Caco-2 (cell line): ENCODE measurements at regions of chr15 and their contacts with region 1.

Region 1: DNA sequence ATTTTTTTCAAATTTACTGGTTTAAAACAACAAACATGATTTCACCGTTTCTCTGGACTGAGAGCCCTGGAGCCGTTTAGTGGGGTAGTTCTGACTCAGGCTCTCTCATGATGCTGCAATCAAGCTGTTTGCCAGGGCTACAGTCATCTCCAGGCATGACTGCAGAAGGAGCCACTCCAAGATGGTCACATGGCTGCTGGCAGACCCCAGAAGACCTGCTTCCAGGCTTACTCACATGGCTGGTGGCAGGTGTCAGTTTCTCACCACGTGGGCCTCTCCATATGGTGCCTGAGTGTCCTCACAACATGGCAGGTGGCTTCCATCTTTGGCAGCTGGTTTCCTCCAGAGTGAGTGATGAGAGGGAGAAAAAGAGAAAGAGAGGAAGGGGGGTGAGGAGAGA is 378.3 kb upstream of the RGMA start:
- DNase-seq: no peak
- H3K4me3 ChIP-seq: no peak overlapping the region
- H3K4me3 Mint-ChIP-seq: no peak overlapping the region
- H3K27ac Mint-ChIP-seq: no peak overlapping the region
- H3K4me1 ChIP-seq: no peaks in the 10 kb centered on the region
- H3K4me1 Mint-ChIP-seq: no peaks in the 10 kb centered on the region
- H3K27me3 ChIP-seq: no peaks in the 10 kb centered on the region
- H3K27me3 Mint-ChIP-seq: peaks cover 3% of the 10 kb centered on the region
- CTCF ChIP-seq: no peak

Region 2: DNA sequence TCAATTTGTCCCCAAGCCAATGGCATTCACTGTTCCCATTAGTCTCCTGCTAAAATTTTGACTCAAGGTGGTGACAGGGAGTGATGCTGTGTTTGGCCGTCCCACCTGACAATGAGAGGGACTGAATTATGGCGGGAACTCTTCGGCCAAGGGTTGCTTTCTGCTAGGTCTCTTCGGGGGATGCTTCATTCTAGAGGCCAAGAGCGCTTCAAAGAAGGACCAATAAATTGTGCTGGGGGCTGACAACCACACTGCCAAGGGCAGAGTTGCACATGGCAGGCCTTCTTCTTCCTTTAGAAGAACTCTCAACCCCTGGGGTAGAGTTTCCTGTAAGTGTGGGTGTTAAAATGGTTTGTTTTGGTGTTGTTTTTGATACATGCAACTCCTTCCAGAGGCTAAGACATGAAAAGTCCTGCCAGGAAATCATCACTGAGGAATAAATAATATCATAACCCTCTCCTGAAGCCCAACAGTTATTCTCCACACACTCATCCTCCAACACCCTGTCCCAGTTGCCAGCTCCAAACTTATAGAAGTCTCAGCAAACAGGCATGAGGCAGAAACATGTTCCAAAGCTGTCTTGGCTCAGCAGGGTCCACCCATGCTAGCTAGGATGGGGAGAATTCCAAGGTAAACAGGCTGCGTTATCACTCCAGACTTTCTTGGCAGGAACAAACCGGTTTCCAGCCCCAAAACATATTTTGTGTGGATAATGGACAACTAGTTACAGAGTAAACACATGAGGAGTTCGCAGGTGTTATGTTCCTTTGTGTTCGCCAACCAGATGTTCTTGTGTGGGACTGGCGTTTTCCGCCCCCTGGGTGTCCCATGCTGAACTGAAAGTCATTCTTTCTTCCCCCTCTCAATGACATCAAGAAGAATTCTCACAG is 18.4 kb after region 1 on chr15:
- CTCF ChIA-PET with region 1: no interaction called
- POLR2A ChIA-PET with region 1: no interaction called
- intact Hi-C with region 1: no loop called
- DNase-seq: no peak
- H3K4me3 ChIP-seq: no peak overlapping the region
- H3K4me3 Mint-ChIP-seq: no peak overlapping the region
- H3K27ac Mint-ChIP-seq: no peak overlapping the region
- H3K4me1 ChIP-seq: no peaks in the 10 kb centered on the region; the same call in 1 of the 2 replicates
- H3K4me1 Mint-ChIP-seq: peaks cover 7% of the 10 kb centered on the region
- H3K27me3 ChIP-seq: no peaks in the 10 kb centered on the region
- H3K27me3 Mint-ChIP-seq: no peaks in the 10 kb centered on the region
- CTCF ChIP-seq: peak in 1 of 2 experiments; percentile 26

Region 3: DNA sequence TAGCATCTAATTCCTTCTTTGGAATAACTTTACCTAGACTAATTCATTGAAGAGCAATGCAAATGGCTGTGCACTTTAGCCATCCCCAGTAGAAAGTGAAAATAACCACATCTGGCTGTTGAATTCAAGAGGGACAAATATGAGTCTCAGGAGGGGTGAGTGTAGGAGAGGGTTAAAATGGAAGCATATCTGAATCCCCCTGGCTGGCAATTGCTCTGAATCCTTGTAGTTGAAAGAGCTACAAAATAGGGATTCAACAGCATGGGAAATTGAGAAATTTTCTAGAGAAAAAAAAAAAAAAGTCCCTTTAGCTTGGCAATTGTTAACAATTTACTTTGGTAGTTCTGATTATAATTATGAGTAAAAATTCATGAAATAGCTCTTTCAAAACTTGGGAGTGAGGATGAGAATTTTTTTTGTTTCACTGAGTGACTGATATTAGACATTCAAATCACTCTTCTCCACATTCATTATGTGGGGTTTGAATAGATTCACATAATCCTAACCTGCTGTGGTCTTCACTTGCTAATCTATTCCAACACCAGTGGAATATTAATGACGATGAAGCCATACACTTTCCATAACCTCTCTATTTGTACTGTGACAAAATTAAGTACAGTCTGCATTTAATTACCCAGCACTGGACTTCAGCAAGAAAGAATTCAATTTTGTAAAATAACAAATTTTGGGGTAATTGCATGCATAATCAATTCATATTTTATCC is 195.0 kb after region 1 on chr15:
- CTCF ChIA-PET with region 1: interaction called, 10 read pairs
- POLR2A ChIA-PET with region 1: no interaction called
- intact Hi-C with region 1: no loop called
- DNase-seq: no peak
- H3K4me3 ChIP-seq: no peak overlapping the region
- H3K4me3 Mint-ChIP-seq: no peak overlapping the region
- H3K27ac Mint-ChIP-seq: no peak overlapping the region
- H3K4me1 ChIP-seq: no peaks in the 10 kb centered on the region
- H3K4me1 Mint-ChIP-seq: no peaks in the 10 kb centered on the region
- H3K27me3 ChIP-seq: no peaks in the 10 kb centered on the region
- H3K27me3 Mint-ChIP-seq: peaks cover 8% of the 10 kb centered on the region
- CTCF ChIP-seq: no peak